Motor neuron (in vitro differentiated cells): ENCODE measurements at regions of chr2 and their contacts with region 1.

Region 1: DNA sequence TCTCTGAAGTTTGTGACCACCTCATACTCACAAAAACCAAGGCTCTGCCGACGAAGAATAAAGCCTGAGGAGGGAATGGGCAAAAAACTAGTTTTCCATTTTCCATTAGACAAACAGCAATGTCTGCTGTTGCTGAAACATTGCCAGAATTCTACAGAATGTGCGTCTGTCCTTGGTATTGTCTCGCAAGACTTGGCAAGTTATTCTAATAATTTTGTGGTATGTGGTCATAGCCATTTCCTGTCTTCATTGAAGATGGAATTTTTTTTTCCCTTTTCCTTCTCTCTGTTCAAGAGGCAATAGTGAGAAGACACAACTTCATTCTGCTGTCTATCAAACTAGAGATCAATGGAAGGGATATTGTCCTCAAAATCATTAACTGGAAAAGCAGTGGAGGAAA is 296.1 kb downstream of the RND3 start:
- ATAC-seq: no peak
- H3K4me3 ChIP-seq: no peak overlapping the region
- H3K27ac ChIP-seq: no peak overlapping the region
- H3K4me1 ChIP-seq: no peaks in the 10 kb centered on the region

Region 2: DNA sequence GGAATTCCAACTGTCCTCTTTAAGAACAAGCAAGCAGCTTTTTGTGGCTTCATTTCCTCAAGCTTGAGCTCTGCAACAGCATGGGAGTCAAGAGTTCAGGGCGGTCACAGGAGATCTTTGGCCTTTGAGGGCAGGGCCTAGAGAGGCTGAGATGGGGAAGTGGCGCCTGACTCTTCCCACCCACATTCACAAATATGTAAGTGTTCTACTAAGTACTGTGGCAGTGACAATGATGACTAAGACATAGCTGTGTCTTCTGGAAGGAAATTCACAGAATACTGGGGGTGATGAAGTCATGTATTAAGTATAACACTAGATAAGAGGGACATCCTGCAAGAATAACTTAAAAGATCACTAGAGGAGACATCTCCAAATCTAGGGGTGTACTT is 281.2 kb after region 1 on chr2:
- in situ Hi-C with region 1: loop called in 1 of 9 experiments (anchors 25 kb)
- ATAC-seq: peak in 4 of 8 experiments; percentile 12 to 82 (median 53)
- H3K4me3 ChIP-seq: no peak overlapping the region
- H3K27ac ChIP-seq: no peak overlapping the region
- H3K4me1 ChIP-seq: peaks cover 11 to 43% of the 10 kb centered on the region in 2 donors